WTC11 (cell line): ENCODE measurements at regions of chr5 and their contacts with region 1.

Region 1: GRCh38 chr5:140372971-140373487 is 13.0 kb downstream of the SLC4A9 start:
- DNase-seq: peak; percentile 88
- ATAC-seq: peak; percentile 97
- H3K4me3 Mint-ChIP-seq: no peak overlapping the region
- H3K27ac Mint-ChIP-seq: peak overlapping the region; percentile 62
- H3K4me1 Mint-ChIP-seq: peaks cover 4% of the 10 kb centered on the region
- H3K27me3 Mint-ChIP-seq: no peaks in the 10 kb centered on the region; the same call in 1 of the 2 replicates
- CTCF ChIP-seq: peak; percentile 66

Region 2: GRCh38 chr5:140113699-140114263 is 259.2 kb before region 1 on chr5 and contains the start of gene PURA:
- CTCF ChIA-PET with region 1: no interaction called
- POLR2A ChIA-PET with region 1: no interaction called
- DNase-seq: peak; percentile 96
- ATAC-seq: peak; percentile 85
- H3K4me3 Mint-ChIP-seq: peak within 1 kb of the TSS; percentile 86
- H3K27ac Mint-ChIP-seq: peak within 1 kb of the TSS; percentile 73; the same call in 1 of the 2 replicates
- H3K4me1 Mint-ChIP-seq: peaks cover 73% of the 10 kb centered on the region
- H3K27me3 Mint-ChIP-seq: peaks cover 77% of the 10 kb centered on the region
- CTCF ChIP-seq: no peak; the same call in 1 of the 2 replicates
- total RNA-seq, gene PURA: 6.0 to 9.0 TPM (median 6.4 TPM) in 3 replicates

Region 3: DNA sequence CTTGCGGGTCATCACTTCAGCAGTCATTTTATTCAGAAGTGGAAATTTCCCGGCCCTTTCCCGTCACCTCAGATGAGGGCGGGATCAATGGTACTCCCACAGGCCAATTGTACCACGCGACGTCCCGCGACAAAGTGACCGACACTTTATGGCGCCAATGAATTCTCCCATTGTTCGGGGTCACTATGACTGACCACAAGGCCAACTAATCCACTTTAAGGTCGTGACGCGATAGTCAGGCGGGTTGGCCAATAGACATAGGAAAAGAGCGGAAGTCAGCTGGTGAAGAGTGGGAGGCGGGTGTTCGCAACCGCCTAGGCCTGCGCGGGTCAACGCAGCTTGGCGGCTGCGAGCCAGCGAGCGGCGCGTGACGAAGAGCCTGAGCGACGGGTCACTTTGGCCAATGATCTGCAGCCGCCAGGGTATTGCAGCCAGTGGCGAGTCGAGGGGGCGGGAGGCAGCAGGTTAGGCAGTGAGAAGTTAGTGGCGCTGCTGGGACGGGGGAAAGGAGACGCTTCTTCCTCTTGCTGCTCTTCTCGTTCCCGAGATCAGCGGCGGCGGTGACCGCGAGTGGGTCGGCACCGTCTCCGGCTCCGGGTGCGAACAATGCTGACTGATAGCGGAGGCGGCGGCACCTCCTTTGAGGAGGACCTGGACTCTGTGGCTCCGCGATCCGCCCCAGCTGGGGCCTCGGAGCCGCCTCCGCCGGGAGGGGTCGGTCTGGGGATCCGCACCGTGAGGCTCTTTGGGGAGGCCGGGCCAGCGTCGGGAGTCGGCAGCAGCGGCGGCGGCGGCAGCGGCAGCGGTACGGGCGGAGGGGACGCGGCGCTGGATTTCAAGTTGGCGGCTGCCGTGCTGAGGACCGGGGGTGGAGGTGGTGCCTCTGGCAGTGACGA is 28.6 kb after region 1 on chr5 and contains the start of gene ANKHD1:
- CTCF ChIA-PET with region 1: interaction called, 30 read pairs
- POLR2A ChIA-PET with region 1: interaction called, 6 read pairs
- DNase-seq: peak; percentile 98
- ATAC-seq: peak; percentile 87
- H3K4me3 Mint-ChIP-seq: no peak within 1 kb of the TSS
- H3K27ac Mint-ChIP-seq: peak within 1 kb of the TSS; percentile 95
- H3K4me1 Mint-ChIP-seq: peaks cover 47% of the 10 kb centered on the region
- H3K27me3 Mint-ChIP-seq: no peaks in the 10 kb centered on the region
- CTCF ChIP-seq: no peak
- total RNA-seq, gene ANKHD1: 89.8 to 113 TPM (median 105 TPM) in 3 replicates

Region 4: GRCh38 chr5:140408750-140409256 is 35.8 kb after region 1 on chr5:
- CTCF ChIA-PET with region 1: interaction called, 12 read pairs
- POLR2A ChIA-PET with region 1: no interaction called
- DNase-seq: no peak
- ATAC-seq: no peak
- H3K4me3 Mint-ChIP-seq: no peak overlapping the region
- H3K27ac Mint-ChIP-seq: peak overlapping the region; percentile 63; the same call in 1 of the 2 replicates
- H3K4me1 Mint-ChIP-seq: peaks cover 20% of the 10 kb centered on the region
- H3K27me3 Mint-ChIP-seq: no peaks in the 10 kb centered on the region
- CTCF ChIP-seq: no peak

Region 5: GRCh38 chr5:140595538-140596300 is 222.7 kb after region 1 on chr5:
- CTCF ChIA-PET with region 1: no interaction called
- POLR2A ChIA-PET with region 1: no interaction called
- DNase-seq: no peak
- ATAC-seq: no peak
- H3K4me3 Mint-ChIP-seq: no peak overlapping the region
- H3K27ac Mint-ChIP-seq: no peak overlapping the region
- H3K4me1 Mint-ChIP-seq: peaks cover 5% of the 10 kb centered on the region
- H3K27me3 Mint-ChIP-seq: peaks cover 30% of the 10 kb centered on the region
- CTCF ChIP-seq: no peak

Region 6: GRCh38 chr5:140639148-140639979 is 266.3 kb after region 1 on chr5 and contains the start of gene TMCO6:
- CTCF ChIA-PET with region 1: interaction called, 10 read pairs
- POLR2A ChIA-PET with region 1: no interaction called
- DNase-seq: peak; percentile 96
- ATAC-seq: peak; percentile 97
- H3K4me3 Mint-ChIP-seq: peak within 1 kb of the TSS; percentile 88
- H3K27ac Mint-ChIP-seq: peak within 1 kb of the TSS; percentile 87
- H3K4me1 Mint-ChIP-seq: peaks cover 17% of the 10 kb centered on the region
- H3K27me3 Mint-ChIP-seq: peaks cover 2% of the 10 kb centered on the region; the same call in 1 of the 2 replicates
- CTCF ChIP-seq: no peak
- total RNA-seq, gene TMCO6: 28.7 to 32.6 TPM (median 32.2 TPM) in 3 replicates